ENCODE measurements at regions of chr1 and their contacts with region 1.

Region 1: DNA sequence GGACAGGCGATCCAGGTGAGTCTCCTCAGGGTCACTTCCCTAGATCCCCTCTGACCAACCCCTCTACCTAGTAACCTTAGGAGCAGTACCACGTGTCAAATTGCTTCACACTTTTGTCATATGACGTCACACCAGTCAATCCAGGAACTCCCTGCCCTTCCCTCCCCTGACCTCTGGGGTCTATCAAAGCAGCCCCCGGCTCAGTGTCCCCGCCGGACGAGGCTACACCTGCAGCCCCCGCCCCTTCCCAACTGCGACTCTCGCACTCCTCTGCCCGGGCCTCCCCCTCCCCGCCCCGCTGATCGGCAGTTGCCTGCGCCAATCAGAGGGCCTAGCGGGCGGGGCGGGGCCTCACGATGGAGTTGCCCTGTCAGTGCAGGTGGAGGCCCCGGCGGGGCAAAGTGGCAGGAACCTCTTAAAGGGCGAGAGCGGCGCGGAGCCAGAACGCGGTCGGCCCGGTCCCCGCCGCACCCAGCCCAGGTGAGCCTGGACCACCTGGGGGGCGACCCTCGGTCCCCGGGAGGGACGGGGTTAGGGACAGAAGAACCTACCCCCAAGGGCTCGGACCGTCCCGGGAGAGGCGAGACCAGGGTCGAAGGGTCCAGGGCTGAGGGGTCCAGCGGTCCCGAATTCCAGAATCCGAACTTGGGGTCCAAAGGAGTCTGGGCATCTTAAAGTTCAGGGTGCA is 27.5 kb upstream of the EPB41 start:
- DNase-seq: peak; percentile 94
- ATAC-seq: peak; percentile 73
- H3K4me3 ChIP-seq: peak overlapping the region; percentile 76 to 93 (median 82)
- H3K4me3 Mint-ChIP-seq: peak overlapping the region; percentile 92
- H3K27ac ChIP-seq: peak overlapping the region; percentile 56 to 97
- H3K27ac Mint-ChIP-seq: peak overlapping the region; percentile 95
- H3K4me1 ChIP-seq: peaks cover 26 to 54% of the 10 kb centered on the region in 2 donors
- H3K4me1 Mint-ChIP-seq: peaks cover 63% of the 10 kb centered on the region
- H3K27me3 ChIP-seq: no peaks in the 10 kb centered on the region
- H3K27me3 Mint-ChIP-seq: no peaks in the 10 kb centered on the region
- CTCF ChIP-seq: no peak

Region 2: DNA sequence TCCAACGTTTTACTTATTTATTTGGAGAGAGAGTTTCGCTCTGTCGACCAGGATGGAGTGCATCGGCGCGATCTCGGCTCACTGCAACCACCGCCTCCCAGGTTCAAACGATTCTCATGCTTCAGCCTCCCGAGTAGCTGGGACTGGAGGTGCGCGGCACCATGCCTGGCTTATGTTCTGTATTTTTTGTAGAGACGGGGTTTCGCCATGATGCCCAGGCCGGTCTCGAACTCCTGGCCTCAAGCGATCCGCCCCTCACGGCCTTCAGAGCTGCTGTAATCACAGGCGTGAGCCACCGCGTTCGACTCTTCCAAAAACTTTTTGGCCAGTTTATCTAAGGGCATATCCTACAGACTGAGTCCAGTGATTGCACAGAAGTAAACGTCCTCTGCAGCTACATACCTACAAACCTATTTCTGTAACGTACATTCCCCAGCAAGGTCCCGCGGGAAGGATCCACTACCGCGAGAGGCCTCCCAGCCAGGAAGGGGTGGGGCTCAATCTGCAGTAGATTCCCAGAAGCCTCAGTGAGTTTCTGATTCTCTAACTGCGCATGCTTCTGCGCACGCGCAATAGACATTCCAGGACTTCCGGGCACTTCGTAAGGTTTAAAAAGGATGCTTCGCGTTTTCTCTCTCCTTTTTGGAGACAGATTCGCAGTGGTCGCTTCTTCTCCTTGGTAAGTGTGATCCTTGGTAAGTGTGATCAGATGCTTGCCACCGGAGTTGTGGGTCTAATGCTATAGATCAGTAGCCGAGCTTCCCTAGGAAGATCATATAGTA is 381.3 kb before region 1 on chr1 and contains the start of gene RCC1:
- CTCF ChIA-PET with region 1: no interaction called
- POLR2A ChIA-PET with region 1: interaction called, 6 read pairs
- intact Hi-C with region 1: loop called (anchors 5 kb)
- DNase-seq: peak; percentile 98
- ATAC-seq: peak; percentile 94
- H3K4me3 ChIP-seq: peak within 1 kb of the TSS; percentile 60 to 84 (median 80)
- H3K4me3 Mint-ChIP-seq: peak within 1 kb of the TSS; percentile 97
- H3K27ac ChIP-seq: peak within 1 kb of the TSS; percentile 65 to 67
- H3K27ac Mint-ChIP-seq: peak within 1 kb of the TSS; percentile 98
- H3K4me1 ChIP-seq: peaks cover 38 to 48% of the 10 kb centered on the region in 2 donors
- H3K4me1 Mint-ChIP-seq: peaks cover 42% of the 10 kb centered on the region
- H3K27me3 ChIP-seq: no peaks in the 10 kb centered on the region
- H3K27me3 Mint-ChIP-seq: no peaks in the 10 kb centered on the region
- CTCF ChIP-seq: no peak
- total RNA-seq, gene RCC1: 16.3 and 17.5 TPM in 2 replicates

Region 3: DNA sequence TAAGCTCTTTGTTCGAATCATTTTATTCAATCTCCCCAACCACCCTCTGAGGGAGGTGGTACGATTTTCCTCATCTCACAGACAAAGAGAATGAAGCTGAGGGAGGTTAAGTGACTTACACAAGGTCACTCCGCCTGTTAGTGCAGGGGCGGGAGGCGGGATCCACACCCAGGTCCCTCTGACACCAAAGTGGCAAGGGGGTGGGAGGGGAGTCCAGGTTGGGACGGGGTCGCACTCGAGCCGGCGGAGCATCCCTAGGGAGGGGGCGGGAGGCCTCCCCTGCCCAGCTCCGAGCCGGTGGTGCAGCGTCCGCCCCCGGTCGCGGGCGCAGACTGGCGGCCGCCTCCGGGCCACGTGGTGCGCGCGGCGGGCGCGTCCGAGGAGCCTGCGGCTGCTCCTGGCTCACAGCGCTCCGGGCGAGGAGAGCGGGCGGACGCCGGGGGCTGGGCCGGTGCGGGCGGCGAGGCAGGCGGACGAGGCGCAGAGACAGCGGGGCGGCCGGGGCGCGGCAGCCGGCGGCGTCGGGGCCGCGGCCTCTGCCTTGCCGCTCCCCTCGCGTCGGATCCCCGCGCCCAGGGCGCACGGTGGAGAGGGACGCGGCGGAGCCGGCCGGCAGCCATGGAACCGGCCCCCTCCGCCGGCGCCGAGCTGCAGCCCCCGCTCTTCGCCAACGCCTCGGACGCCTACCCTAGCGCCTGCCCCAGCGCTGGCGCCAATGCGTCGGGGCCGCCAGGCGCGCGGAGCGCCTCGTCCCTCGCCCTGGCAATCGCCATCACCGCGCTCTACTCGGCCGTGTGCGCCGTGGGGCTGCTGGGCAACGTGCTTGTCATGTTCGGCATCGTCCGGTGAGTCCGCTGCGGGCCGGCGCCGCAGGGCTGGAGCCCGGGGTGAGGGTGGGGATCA is 74.9 kb before region 1 on chr1 and contains the start of gene OPRD1:
- CTCF ChIA-PET with region 1: no interaction called
- POLR2A ChIA-PET with region 1: no interaction called
- intact Hi-C with region 1: no loop called
- DNase-seq: no peak
- ATAC-seq: no peak
- H3K4me3 ChIP-seq: no peak within 1 kb of the TSS
- H3K4me3 Mint-ChIP-seq: no peak within 1 kb of the TSS
- H3K27ac ChIP-seq: no peak within 1 kb of the TSS
- H3K27ac Mint-ChIP-seq: no peak within 1 kb of the TSS
- H3K4me1 ChIP-seq: peaks cover 0 to 4% of the 10 kb centered on the region in 2 donors
- H3K4me1 Mint-ChIP-seq: peaks cover 6% of the 10 kb centered on the region
- H3K27me3 ChIP-seq: peaks cover 0 to 52% (median 20%) of the 10 kb centered on the region in 4 experiments
- H3K27me3 Mint-ChIP-seq: peaks cover 54% of the 10 kb centered on the region
- CTCF ChIP-seq: no peak
- total RNA-seq, gene OPRD1: not detected in 2 replicates

Region 4: GRCh38 chr1:28926629-28927265 is 39.9 kb after region 1 on chr1:
- CTCF ChIA-PET with region 1: interaction called, 8 read pairs
- POLR2A ChIA-PET with region 1: interaction called, 9 read pairs
- intact Hi-C with region 1: loop called (anchors 1 kb)
- DNase-seq: peak; percentile 87
- ATAC-seq: peak; percentile 84
- H3K4me3 ChIP-seq: peak overlapping the region in 4 of 5 experiments; percentile 19 to 60 (median 48)
- H3K4me3 Mint-ChIP-seq: peak overlapping the region; percentile 75
- H3K27ac ChIP-seq: peak overlapping the region; percentile 83 to 94
- H3K27ac Mint-ChIP-seq: peak overlapping the region; percentile 83
- H3K4me1 ChIP-seq: peaks cover 62 to 70% of the 10 kb centered on the region in 2 donors
- H3K4me1 Mint-ChIP-seq: peaks cover 60% of the 10 kb centered on the region
- H3K27me3 ChIP-seq: no peaks in the 10 kb centered on the region
- H3K27me3 Mint-ChIP-seq: no peaks in the 10 kb centered on the region
- CTCF ChIP-seq: no peak

Region 5: DNA sequence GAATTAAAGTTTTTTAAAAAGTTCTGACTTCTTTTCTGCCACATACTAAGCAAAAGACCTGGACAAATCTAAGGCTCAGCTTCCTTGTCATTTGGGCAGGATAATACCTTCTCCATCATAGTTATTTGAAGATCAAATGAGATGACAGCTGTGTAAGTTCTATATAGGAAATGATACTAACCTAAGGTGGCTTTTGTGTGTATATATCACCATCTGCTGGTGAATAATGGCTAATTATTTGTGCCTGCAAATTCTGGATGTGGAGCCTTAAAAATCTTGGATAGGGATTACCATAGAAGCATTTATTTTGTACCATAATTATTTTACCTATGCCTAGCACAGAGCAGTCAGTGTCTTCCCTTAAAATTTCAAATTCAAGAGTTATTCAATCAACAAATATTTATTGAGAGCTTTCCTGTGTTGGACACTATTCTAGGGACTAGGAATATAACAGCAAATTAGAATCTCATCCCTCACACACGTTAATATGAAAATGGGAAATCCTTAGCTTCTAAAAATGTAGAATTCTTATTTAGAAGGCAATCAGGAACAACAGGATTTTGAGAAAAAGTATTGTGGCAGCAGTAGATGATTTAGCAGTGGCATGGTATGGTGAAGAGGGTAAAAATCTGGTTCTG is 147.1 kb after region 1 on chr1:
- CTCF ChIA-PET with region 1: interaction called, 502 read pairs
- POLR2A ChIA-PET with region 1: interaction called, 5 read pairs
- intact Hi-C with region 1: loop called (anchors 1 kb)
- DNase-seq: peak; percentile 65
- ATAC-seq: no peak
- H3K4me3 ChIP-seq: no peak overlapping the region
- H3K4me3 Mint-ChIP-seq: no peak overlapping the region
- H3K27ac ChIP-seq: no peak overlapping the region
- H3K27ac Mint-ChIP-seq: no peak overlapping the region
- H3K4me1 ChIP-seq: no peaks in the 10 kb centered on the region
- H3K4me1 Mint-ChIP-seq: no peaks in the 10 kb centered on the region
- H3K27me3 ChIP-seq: no peaks in the 10 kb centered on the region
- H3K27me3 Mint-ChIP-seq: no peaks in the 10 kb centered on the region
- CTCF ChIP-seq: peak; percentile 91

Region 6: DNA sequence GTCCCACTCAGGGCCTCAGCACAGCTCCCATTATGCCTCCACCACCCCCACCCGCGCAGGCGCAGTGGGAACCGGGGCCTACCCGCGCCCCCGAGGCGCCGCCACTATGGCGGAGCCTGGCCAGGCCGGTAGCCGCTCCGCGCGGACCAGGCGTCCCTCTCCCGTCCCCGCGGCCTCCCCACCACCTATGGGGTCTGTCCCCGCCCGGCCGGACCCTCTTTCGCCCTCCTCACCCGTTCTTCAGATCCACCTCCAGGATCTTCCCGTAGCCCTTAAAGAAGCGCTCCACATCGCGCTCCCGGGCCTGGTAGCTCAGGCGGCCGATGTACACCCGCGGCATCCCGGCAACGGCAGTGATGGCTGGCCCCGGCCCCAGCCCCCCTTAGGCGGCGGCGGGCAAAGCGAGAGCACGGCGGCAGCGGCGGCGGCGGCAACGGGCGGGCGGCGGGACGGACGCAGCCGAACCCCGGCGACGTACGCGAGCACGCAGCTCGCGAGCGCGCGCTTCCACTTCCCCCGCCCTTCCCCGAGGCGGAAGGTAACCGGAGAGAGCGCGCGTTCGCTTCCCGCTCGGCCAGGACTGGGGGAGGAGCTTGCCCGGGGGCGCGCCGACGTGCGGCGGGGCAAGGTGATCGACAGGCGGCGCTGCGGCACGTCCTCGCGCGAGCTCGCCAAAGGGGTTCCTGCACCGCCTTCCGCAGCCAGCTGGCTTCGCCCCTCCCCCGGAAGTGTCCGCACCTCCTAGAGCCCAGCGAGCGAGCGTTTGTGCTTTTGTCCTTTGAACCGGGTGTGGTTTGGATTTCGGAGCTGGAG is 294.7 kb after region 1 on chr1 and contains the start of gene SRSF4:
- CTCF ChIA-PET with region 1: interaction called, 14 read pairs
- POLR2A ChIA-PET with region 1: interaction called, 6 read pairs
- intact Hi-C with region 1: loop called (anchors 1 kb)
- DNase-seq: peak; percentile 99
- ATAC-seq: peak; percentile 93
- H3K4me3 ChIP-seq: peak within 1 kb of the TSS; percentile 85 to 100 (median 95)
- H3K4me3 Mint-ChIP-seq: peak within 1 kb of the TSS; percentile 94
- H3K27ac ChIP-seq: peak within 1 kb of the TSS; percentile 99
- H3K27ac Mint-ChIP-seq: peak within 1 kb of the TSS; percentile 95
- H3K4me1 ChIP-seq: peaks cover 32 to 42% of the 10 kb centered on the region in 2 donors
- H3K4me1 Mint-ChIP-seq: peaks cover 42% of the 10 kb centered on the region
- H3K27me3 ChIP-seq: no peaks in the 10 kb centered on the region
- H3K27me3 Mint-ChIP-seq: no peaks in the 10 kb centered on the region
- CTCF ChIP-seq: peak; percentile 79
- total RNA-seq, gene SRSF4: 93.5 and 100 TPM in 2 replicates

Region 7: DNA sequence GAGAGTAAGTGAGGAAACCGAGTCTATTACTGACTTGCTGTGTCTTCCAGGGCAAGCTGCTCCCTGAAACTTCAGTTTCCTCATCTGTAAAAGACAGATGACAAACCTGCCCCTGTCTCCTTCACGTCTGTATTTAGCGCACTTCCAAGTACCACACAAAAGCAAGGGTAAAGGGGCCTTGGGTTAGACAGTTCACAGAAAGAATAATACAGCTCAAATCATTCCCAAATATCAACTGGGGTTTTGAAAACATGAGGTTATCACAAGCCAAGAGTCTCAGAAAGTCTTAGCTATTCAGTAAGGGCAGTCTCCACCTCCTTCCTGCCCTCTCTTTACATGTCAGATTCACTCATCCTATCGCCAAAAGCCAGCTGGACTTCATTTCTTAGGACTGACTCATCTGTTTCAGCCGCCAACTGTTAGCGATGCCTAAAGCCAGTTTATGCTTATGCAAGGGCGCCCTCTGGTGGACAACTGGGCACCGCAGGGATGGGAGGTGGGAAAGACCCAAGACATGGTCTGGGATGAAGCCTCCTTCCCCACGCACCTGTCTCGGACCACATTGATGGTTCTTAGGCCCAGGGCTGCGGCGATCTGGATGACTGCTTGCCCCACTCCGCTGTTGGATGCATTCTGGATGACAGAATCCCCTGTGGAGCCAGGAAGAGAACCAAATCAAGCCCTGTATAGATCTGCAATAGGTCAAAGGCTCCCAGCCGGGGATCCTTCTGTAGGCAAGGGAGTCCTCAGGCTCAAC is 315.9 kb after region 1 on chr1:
- CTCF ChIA-PET with region 1: interaction called, 112 read pairs
- POLR2A ChIA-PET with region 1: interaction called, 4 read pairs
- intact Hi-C with region 1: loop called (anchors 1 kb)
- DNase-seq: peak; percentile 86
- ATAC-seq: peak; percentile 97
- H3K4me3 ChIP-seq: no peak overlapping the region
- H3K4me3 Mint-ChIP-seq: no peak overlapping the region
- H3K27ac ChIP-seq: no peak overlapping the region
- H3K27ac Mint-ChIP-seq: peak overlapping the region; percentile 16
- H3K4me1 ChIP-seq: peaks cover 0 to 4% of the 10 kb centered on the region in 2 donors
- H3K4me1 Mint-ChIP-seq: peaks cover 2% of the 10 kb centered on the region
- H3K27me3 ChIP-seq: no peaks in the 10 kb centered on the region
- H3K27me3 Mint-ChIP-seq: no peaks in the 10 kb centered on the region
- CTCF ChIP-seq: peak; percentile 98